ENCODE measurements at regions of chr12 and their contacts with region 1.

Region 1: GRCh38 chr12:52879394-52880351 is 25.2 kb downstream of the KRT8 start:
- DNase-seq: peak; percentile 85
- H3K4me3 ChIP-seq: peak overlapping the region in 2 of 4 donors; percentile 12 to 30
- H3K27ac ChIP-seq: peak overlapping the region; percentile 9 to 97 (median 24)
- H3K4me1 ChIP-seq: peaks cover 13 to 35% (median 25%) of the 10 kb centered on the region in 4 donors
- H3K27me3 ChIP-seq: peaks cover 6% of the 10 kb centered on the region
- CTCF ChIP-seq: peak; percentile 56 to 81 (median 67)
- EP300 ChIP-seq: no peak
- POLR2A ChIP-seq: no peak

Region 2: GRCh38 chr12:52156736-52157565 is 722.7 kb before region 1 on chr12:
- in situ Hi-C with region 1: loop called (anchors 10 kb)
- intact Hi-C with region 1: loop called (anchors 5 kb)
- DNase-seq: peak; percentile 83
- H3K4me3 ChIP-seq: no peak overlapping the region
- H3K27ac ChIP-seq: no peak overlapping the region
- H3K4me1 ChIP-seq: peaks cover 6 to 19% (median 13%) of the 10 kb centered on the region in 4 donors
- H3K27me3 ChIP-seq: peaks cover 4% of the 10 kb centered on the region
- CTCF ChIP-seq: peak; percentile 91 to 95 (median 93)
- EP300 ChIP-seq: no peak
- POLR2A ChIP-seq: no peak

Region 3: GRCh38 chr12:52372216-52373154 is 507.2 kb before region 1 on chr12:
- in situ Hi-C with region 1: loop called in 2 of 4 experiments (anchors 10 to 25 kb)
- intact Hi-C with region 1: loop called (anchors 10 kb)
- DNase-seq: peak; percentile 82
- H3K4me3 ChIP-seq: no peak overlapping the region
- H3K27ac ChIP-seq: peak overlapping the region in 3 of 4 donors; percentile 26 to 55 (median 42)
- H3K4me1 ChIP-seq: peaks cover 0 to 5% (median 0%) of the 10 kb centered on the region in 4 donors
- H3K27me3 ChIP-seq: no peaks in the 10 kb centered on the region
- CTCF ChIP-seq: peak; percentile 70 to 81 (median 75)
- EP300 ChIP-seq: no peak
- POLR2A ChIP-seq: no peak

Region 4: GRCh38 chr12:52380271-52380694 is 499.4 kb before region 1 on chr12:
- in situ Hi-C with region 1: loop called (anchors 5 to 25 kb)
- intact Hi-C with region 1: loop called (anchors 10 kb)
- DNase-seq: peak; percentile 44
- H3K4me3 ChIP-seq: no peak overlapping the region
- H3K27ac ChIP-seq: no peak overlapping the region
- H3K4me1 ChIP-seq: no peaks in the 10 kb centered on the region
- H3K27me3 ChIP-seq: no peaks in the 10 kb centered on the region
- CTCF ChIP-seq: peak in 4 of 5 experiments; percentile 28 to 53 (median 47)
- EP300 ChIP-seq: no peak
- POLR2A ChIP-seq: no peak

Region 5: GRCh38 chr12:52582971-52583456 is 296.7 kb before region 1 on chr12:
- in situ Hi-C with region 1: loop called (anchors 5 to 10 kb)
- intact Hi-C with region 1: loop called (anchors 5 kb)
- DNase-seq: peak; percentile 63
- H3K4me3 ChIP-seq: no peak overlapping the region
- H3K27ac ChIP-seq: no peak overlapping the region
- H3K4me1 ChIP-seq: no peaks in the 10 kb centered on the region
- H3K27me3 ChIP-seq: no peaks in the 10 kb centered on the region
- CTCF ChIP-seq: peak; percentile 50 to 83 (median 69)
- EP300 ChIP-seq: no peak
- POLR2A ChIP-seq: no peak

Region 6: DNA sequence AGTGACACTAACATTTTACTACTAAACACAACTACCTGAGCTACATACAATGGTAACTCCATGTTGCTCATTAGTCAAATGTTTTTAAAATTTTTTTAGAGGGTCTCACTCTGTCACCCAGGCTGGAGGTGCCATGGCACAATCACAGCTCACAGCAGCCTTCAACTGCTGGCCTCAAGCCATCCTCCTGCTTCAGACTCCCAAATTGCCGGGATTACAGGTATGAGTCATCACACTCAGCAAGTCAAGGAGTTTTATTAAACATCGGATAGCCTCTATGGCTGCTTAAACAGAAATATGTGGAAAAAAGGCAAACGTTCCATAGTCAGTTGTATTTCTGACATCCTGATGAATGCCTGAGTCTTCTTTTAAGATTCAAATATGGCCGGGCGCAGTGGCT is 638.7 kb after region 1 on chr12:
- in situ Hi-C with region 1: no loop called
- intact Hi-C with region 1: loop called (anchors 10 kb)
- DNase-seq: no peak
- H3K4me3 ChIP-seq: no peak overlapping the region
- H3K27ac ChIP-seq: no peak overlapping the region
- H3K4me1 ChIP-seq: no peaks in the 10 kb centered on the region
- H3K27me3 ChIP-seq: no peaks in the 10 kb centered on the region
- CTCF ChIP-seq: no peak
- EP300 ChIP-seq: no peak
- POLR2A ChIP-seq: no peak